ENCODE measurements at regions of chr15 and their contacts with region 1.

Region 1: DNA sequence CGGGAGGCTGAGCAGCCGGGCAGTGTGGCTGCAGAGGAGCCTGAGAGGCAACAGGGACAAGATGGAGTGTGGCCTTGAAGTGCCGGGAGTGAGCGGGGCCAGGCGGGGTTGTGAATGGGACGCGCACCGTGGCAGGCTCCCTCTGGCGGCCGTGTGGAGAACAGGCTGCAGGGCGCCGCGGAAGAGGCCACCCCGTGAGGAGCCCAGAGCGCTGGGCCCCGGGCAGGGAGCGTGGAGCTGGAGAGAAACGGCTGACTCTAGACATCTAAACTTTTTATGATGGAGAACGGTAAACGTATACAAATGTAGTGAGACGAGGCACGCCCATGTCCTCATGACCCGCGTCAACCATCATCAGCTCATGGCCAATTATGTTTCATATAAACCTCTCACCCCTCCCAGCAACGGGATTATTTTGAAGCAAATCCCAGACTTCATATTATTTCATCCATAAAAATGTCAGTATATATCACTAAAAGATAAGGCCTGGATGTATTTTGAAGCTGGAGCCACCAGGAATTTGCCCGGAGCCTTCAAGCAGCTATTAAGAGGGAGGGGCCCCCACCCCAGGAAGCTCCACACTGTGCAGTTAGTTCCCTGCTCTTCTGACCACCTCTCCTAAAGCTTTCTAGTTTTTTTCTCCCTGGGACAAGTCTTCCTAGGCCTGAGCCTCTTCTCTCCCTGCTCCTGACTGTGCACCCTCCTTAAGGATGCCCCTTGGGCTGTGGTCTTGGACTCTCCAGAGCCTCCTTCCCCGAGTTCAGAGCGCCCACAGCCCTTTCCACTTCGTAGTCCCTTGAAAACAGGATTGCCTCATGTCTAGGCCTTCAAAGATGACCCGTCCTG is 149.4 kb downstream of the SMAD6 start:
- DNase-seq: peak; percentile 93
- CTCF ChIP-seq: peak; percentile 97

Region 2: DNA sequence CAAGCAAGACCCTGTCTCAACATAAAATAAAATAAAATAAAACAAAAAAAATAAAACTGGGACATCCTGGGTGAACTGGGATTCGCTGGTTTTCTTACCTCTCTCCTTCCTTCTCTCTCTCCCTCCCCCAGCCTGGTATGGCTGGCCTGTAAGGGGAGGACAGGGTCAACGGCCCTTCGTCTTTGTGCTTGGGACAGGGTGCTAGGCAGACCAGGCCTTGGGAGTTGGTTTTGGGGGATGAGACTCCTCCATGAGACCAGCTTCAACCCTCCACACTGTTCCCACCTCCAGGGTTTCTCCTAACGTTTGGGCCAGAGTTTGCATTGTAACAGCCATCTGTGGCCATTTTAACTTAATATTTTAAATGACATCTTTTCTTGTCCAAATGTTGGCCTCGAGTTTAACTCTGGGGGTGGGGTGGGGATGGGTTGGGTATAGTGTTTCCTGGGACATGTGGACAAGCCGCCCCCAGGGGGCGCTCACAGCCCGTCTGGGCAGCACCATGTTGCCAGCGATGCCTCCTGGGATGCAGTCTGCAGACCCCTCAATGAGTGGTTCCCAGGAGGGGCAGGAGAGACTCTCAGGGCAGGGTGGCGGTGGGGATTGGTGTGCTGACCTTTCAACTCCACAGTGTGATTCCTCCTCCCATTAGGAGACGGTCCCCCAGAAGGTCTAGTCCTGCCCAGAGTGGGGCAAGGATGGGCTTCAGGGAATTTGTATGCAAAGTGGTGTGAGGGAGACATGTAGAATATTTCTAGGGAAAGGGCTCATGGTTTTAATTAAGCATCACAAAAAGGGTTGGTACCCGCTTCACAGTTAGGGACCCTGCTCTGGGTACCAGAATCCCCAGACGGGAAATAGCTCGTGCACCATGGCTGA is 247.9 kb before region 1 on chr15:
- in situ Hi-C with region 1: loop called (anchors 10 kb)
- DNase-seq: peak; percentile 78
- CTCF ChIP-seq: peak; percentile 74

Region 3: GRCh38 chr15:66803182-66803729 is 48.2 kb before region 1 on chr15:
- in situ Hi-C with region 1: no loop called
- DNase-seq: no peak
- CTCF ChIP-seq: no peak

Measured in GM13977 (cell line).